ENCODE measurements at regions of chr4 and their contacts with region 1.

Region 1: GRCh38 chr4:113106108-113106507 is 56.7 kb downstream of the ANK2 start:
- DNase-seq: no peak
- H3K4me3 ChIP-seq: no peak overlapping the region
- H3K27ac ChIP-seq: no peak overlapping the region
- H3K4me1 ChIP-seq: peaks cover 0 to 4% (median 1%) of the 10 kb centered on the region in 4 experiments; a peak in 2 of 7 replicates
- H3K27me3 ChIP-seq: no peaks in the 10 kb centered on the region
- CTCF ChIP-seq: peak in 2 of 3 experiments; percentile 20 to 28; a peak in 2 of 4 replicates
- EP300 ChIP-seq: no peak
- POLR2A ChIP-seq: no peak
- RAD21 ChIP-seq: peak; percentile 66 to 71

Region 2: DNA sequence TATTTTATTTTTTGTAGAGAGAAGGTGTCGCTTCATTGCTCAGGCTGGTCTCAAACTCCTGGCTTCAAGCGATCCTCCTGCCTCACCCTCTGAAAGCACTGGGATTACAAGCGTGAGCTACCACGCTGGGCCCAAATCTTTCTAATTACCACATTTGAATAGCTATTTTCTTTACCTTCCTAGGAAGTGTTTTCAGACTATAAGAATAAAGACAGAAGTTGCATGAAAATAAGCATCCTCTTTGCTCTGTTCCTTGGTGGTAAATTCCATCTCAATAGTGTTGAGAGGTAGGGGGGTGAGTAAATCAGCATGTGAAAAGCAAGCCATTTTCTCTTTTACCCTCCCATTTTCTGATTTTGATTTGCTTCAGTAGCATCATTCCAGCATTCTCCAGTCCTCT is 346.8 kb before region 1 on chr4:
- CTCF ChIA-PET with region 1: no interaction called
- POLR2A ChIA-PET with region 1: no interaction called
- DNase-seq: peak in 1 of 2 experiments; percentile 65
- H3K4me3 ChIP-seq: peak overlapping the region in 1 of 4 experiments; percentile 35; a peak in 1 of 8 replicates
- H3K27ac ChIP-seq: peak overlapping the region; percentile 78; the same call in 1 of the 2 replicates
- H3K4me1 ChIP-seq: peaks cover 0 to 7% (median 5%) of the 10 kb centered on the region in 4 experiments; a peak in 4 of 7 replicates
- H3K27me3 ChIP-seq: no peaks in the 10 kb centered on the region
- CTCF ChIP-seq: no peak
- EP300 ChIP-seq: peak in 1 of 2 experiments; percentile 79; a peak in 1 of 3 replicates
- POLR2A ChIP-seq: no peak; a peak in 1 of 3 replicates
- RAD21 ChIP-seq: no peak; a peak in 1 of 4 replicates

Region 3: GRCh38 chr4:113116414-113117357 is 10.6 kb after region 1 on chr4:
- CTCF ChIA-PET with region 1: interaction called, 48 read pairs
- POLR2A ChIA-PET with region 1: interaction called, 5 read pairs
- DNase-seq: no peak
- H3K4me3 ChIP-seq: no peak overlapping the region
- H3K27ac ChIP-seq: no peak overlapping the region
- H3K4me1 ChIP-seq: peaks cover 0 to 15% (median 6%) of the 10 kb centered on the region in 4 experiments
- H3K27me3 ChIP-seq: no peaks in the 10 kb centered on the region
- CTCF ChIP-seq: no peak
- EP300 ChIP-seq: no peak
- POLR2A ChIP-seq: no peak
- RAD21 ChIP-seq: no peak

Region 4: DNA sequence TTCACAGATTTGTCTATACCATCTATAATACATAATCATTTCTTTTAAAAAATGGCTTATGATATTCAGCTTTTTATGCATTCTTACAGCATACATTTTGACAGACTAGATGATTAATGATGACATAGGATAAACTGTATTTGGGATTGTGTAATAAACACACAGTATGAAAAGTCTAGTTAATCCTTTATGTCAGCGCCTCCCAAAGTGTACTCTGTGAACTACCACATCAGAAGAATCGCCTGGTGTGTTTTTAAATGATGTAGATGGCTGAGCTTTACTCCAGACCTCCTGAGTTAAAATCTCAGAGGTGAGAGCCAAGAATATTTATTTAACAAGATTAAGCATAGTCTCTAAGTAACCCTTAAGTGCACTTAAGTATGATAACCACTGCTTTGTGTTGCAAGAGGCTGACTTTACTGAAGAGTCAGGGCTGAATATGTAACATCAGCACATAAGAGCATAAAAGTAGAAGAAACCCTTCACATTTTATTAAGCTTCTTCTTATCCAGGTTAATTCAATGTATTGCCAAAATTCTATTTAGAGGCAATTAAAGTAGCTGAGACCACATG is 47.5 kb after region 1 on chr4:
- CTCF ChIA-PET with region 1: interaction called, 12 read pairs
- POLR2A ChIA-PET with region 1: no interaction called
- DNase-seq: no peak
- H3K4me3 ChIP-seq: no peak overlapping the region
- H3K27ac ChIP-seq: no peak overlapping the region
- H3K4me1 ChIP-seq: peaks cover 1 to 5% (median 2%) of the 10 kb centered on the region in 4 experiments; a peak in 4 of 7 replicates
- H3K27me3 ChIP-seq: no peaks in the 10 kb centered on the region
- CTCF ChIP-seq: peak in 1 of 3 experiments; percentile 29; a peak in 1 of 4 replicates
- EP300 ChIP-seq: no peak
- POLR2A ChIP-seq: no peak
- RAD21 ChIP-seq: peak; percentile 30 to 50

Region 5: DNA sequence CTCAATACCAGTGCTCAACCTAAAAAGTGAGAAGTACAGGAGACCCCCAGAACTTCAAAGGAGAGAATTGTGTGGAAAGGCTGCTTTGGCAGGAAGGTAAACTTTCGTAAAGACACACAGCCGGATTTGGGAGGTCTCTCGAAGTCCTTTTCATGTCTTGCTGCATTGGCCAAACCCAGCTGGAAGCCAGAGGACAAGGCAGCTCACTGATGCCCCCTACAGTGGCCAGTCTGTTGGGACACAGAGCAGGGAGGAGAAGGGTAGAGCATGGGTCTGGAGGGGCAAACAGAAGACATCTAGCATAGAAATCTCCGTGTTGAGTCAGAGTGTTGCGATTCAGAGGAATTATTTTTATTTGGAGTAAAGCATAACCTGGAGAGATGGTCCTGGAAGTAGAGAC is 142.2 kb after region 1 on chr4:
- CTCF ChIA-PET with region 1: interaction called, 20 read pairs
- POLR2A ChIA-PET with region 1: no interaction called
- DNase-seq: peak; percentile 39 to 83
- H3K4me3 ChIP-seq: no peak overlapping the region
- H3K27ac ChIP-seq: no peak overlapping the region
- H3K4me1 ChIP-seq: no peaks in the 10 kb centered on the region
- H3K27me3 ChIP-seq: no peaks in the 10 kb centered on the region
- CTCF ChIP-seq: peak; percentile 79 to 93 (median 91)
- EP300 ChIP-seq: no peak
- POLR2A ChIP-seq: no peak
- RAD21 ChIP-seq: peak; percentile 86 to 93

Region 6: GRCh38 chr4:113272523-113272922 is 166.4 kb after region 1 on chr4:
- CTCF ChIA-PET with region 1: interaction called, 13 read pairs
- POLR2A ChIA-PET with region 1: no interaction called
- DNase-seq: no peak
- H3K4me3 ChIP-seq: no peak overlapping the region
- H3K27ac ChIP-seq: no peak overlapping the region
- H3K4me1 ChIP-seq: peaks cover 6 to 19% (median 15%) of the 10 kb centered on the region in 4 experiments; a peak in 5 of 7 replicates
- H3K27me3 ChIP-seq: no peaks in the 10 kb centered on the region
- CTCF ChIP-seq: no peak
- EP300 ChIP-seq: no peak
- POLR2A ChIP-seq: no peak
- RAD21 ChIP-seq: no peak

Region 7: GRCh38 chr4:113292371-113293042 is 186.4 kb after region 1 on chr4:
- CTCF ChIA-PET with region 1: interaction called, 11 read pairs
- POLR2A ChIA-PET with region 1: no interaction called
- DNase-seq: peak; percentile 80 to 84
- H3K4me3 ChIP-seq: peak overlapping the region; percentile 12 to 40 (median 28); a peak in 5 of 8 replicates
- H3K27ac ChIP-seq: peak overlapping the region; percentile 84
- H3K4me1 ChIP-seq: peaks cover 11 to 33% (median 20%) of the 10 kb centered on the region in 4 experiments
- H3K27me3 ChIP-seq: no peaks in the 10 kb centered on the region
- CTCF ChIP-seq: no peak
- EP300 ChIP-seq: peak in 1 of 2 experiments; percentile 2; a peak in 1 of 3 replicates
- POLR2A ChIP-seq: peak; percentile 30 to 57; a peak in 2 of 3 replicates
- RAD21 ChIP-seq: no peak

Measured in H1 (cell line).